ENCODE measurements at regions of chr1 and their contacts with region 1.

Region 1: GRCh38 chr1:186194107-186194756 is 180.8 kb downstream of the TPR start:
- DNase-seq: no peak
- ATAC-seq: no peak
- H3K4me3 ChIP-seq: no peak overlapping the region
- H3K27ac ChIP-seq: no peak overlapping the region
- H3K4me1 ChIP-seq: no peaks in the 10 kb centered on the region
- H3K27me3 ChIP-seq: no peaks in the 10 kb centered on the region
- CTCF ChIP-seq: no peak
- POLR2A ChIP-seq: no peak

Region 2: GRCh38 chr1:185821612-185822385 is 372.4 kb before region 1 on chr1:
- intact Hi-C with region 1: loop called in 1 of 10 experiments (anchors 10 kb)
- DNase-seq: no peak
- ATAC-seq: no peak
- H3K4me3 ChIP-seq: no peak overlapping the region
- H3K27ac ChIP-seq: no peak overlapping the region
- H3K4me1 ChIP-seq: peaks cover 0 to 18% (median 0%) of the 10 kb centered on the region in 12 donors
- H3K27me3 ChIP-seq: no peaks in the 10 kb centered on the region
- CTCF ChIP-seq: no peak
- POLR2A ChIP-seq: no peak